ENCODE measurements at regions of chr5 and their contacts with region 1.

Region 1: GRCh38 chr5:157858527-157859226 is at the start of gene CLINT1:
- DNase-seq: peak; percentile 97
- ATAC-seq: peak; percentile 99
- total RNA-seq, gene CLINT1: 55.5 TPM

Region 2: DNA sequence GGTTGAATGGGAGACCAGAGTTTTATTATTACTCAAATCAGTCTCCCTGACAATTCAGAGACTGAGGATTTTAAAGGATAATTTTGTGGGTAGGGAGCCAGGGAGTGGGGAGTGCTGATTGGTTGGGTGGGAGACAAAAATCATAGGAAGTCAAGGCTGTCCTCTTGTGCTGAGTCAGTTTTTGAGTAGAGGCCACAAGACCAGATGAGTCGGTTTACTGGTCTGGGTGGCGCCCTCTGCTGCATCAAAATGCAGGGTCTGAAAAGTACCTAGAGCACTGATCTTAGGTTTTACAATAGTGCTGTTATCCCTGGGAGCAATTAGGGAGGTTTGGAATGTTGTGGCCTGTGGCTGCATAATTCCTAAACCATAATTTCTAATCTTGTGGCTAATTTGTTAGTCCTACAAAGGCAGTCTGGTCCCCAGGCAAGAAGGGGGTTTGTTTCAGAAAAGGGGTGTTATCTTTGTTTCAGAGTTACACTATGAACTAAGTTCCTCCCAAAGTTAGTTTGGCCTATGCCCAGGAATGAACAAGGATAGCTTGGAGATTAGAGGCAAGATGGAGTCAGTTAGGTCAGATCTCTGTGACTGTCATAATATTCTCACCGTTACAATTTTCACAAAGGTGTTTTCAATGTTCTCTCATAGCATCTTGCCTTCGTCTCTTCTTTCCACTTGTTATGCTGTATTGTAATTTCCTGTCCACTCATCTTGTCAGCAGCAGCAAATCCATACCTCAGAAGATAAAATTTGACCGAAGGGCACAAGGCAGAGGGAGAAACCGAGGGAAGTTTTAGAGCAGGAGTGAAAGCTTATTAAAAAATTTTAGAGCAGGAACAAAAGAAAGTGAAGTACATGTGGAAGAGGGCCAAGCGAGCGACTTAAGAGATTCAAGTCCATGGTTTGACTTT is 59.5 kb after region 1 on chr5:
- intact Hi-C with region 1: loop called (anchors 5 kb)
- DNase-seq: peak; percentile 72
- ATAC-seq: peak; percentile 22

Region 3: DNA sequence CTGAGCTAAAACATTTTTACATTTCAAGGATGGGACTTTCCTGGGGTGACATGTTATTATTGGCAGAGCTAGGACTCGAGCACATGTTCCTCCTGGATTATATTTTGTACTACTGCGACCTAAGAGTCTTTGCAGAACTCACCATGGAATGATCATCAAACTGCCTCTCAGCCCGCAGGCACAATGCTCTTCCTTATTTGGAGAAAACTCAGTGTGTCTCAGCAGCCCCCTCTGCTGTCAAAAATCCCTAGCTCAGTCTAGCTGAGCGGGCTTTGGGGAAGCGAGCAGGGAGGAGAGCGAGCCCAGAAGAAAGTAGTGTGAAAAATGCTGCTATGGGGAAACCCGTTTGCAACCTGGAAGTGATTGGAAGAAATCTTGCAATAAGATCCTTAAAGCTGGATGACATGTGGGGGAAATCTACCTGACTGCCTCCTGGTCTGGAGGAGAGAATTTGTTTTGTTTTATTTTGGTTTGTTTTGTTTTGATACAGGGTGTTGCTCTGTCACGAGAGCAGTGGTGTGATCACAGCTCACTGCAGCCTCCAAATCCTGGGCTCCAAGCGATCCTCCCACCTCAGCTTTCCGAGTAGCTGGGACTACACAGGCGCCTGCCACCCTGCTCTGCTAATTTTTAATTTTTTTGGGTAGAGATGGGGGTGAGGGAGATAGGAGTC is 90.2 kb after region 1 on chr5:
- intact Hi-C with region 1: loop called (anchors 5 kb)
- DNase-seq: peak; percentile 89
- ATAC-seq: peak; percentile 100

Region 4: GRCh38 chr5:158275511-158275910 is 416.8 kb after region 1 on chr5:
- intact Hi-C with region 1: no loop called
- DNase-seq: no peak
- ATAC-seq: no peak

Measured in Right ventricle myocardium superior (tissue), 1 donor.